Dorsolateral prefrontal cortex (tissue), 120 donors: ENCODE measurements at regions of chr7 and their contacts with region 1.

Region 1: GRCh38 chr7:35624299-35625186 is 70.4 kb downstream of the HERPUD2 start:
- DNase-seq: peak in 5 of 10 donors; percentile 10 to 45 (median 24)
- H3K4me3 ChIP-seq: peak overlapping the region in 15 of 59 donors; percentile 1 to 37 (median 19)
- H3K27ac ChIP-seq: no peak overlapping the region
- H3K27me3 ChIP-seq: no peaks in the 10 kb centered on the region
- CTCF ChIP-seq: peak in 55 of 56 donors; percentile 32 to 91 (median 80)

Region 2: DNA sequence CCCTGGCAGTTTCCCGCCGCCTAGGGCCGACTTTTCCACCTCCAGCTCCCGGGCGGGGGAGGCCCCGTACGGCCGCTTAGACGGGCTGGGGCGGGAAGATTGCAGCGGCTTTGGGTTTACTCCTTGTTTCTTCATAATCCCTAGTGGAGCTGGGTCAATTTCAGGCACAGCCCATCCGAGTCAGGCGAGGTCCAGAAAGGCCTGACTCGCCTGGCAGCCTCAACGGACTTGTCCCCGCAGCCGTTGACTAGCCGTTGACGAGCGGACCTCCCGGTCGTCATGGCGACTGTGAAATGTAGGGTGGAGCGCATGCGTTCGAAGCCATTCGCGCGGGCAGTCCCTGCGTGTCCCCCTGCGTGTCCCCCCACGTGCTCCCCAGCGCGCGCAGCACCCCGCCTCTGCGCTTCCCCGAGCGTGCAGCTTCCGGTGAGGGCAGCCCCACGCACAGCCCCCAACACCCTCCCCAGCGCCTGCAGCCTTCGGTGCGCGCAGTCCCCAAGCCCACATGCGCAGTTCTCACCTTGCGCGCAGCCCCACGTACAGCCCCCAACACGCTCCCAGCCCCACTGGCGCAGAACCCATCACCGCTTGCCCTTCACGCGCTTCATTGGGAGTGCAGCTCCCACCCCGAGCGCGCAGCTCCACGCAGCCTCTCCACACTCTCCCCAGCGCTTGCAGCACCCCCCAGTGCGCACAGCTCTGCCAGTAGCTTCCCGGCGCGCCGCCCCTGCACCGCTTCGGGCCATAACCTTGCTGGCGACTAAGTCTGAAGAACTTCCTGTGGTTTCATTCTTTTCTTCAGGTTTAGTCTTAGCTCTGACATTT is 438.4 kb before region 1 on chr7:
- intact Hi-C with region 1: loop called in 1 of 2 experiments (anchors 10 kb)
- DNase-seq: peak; percentile 35 to 85 (median 80)
- H3K4me3 ChIP-seq: peak overlapping the region; percentile 36 to 72 (median 55)
- H3K27ac ChIP-seq: peak overlapping the region in 39 of 59 donors; percentile 24 to 78 (median 56)
- H3K27me3 ChIP-seq: peaks cover 0 to 20% (median 0%) of the 10 kb centered on the region in 45 donors
- CTCF ChIP-seq: peak in 4 of 56 donors; percentile 10 to 18 (median 14)

Region 3: DNA sequence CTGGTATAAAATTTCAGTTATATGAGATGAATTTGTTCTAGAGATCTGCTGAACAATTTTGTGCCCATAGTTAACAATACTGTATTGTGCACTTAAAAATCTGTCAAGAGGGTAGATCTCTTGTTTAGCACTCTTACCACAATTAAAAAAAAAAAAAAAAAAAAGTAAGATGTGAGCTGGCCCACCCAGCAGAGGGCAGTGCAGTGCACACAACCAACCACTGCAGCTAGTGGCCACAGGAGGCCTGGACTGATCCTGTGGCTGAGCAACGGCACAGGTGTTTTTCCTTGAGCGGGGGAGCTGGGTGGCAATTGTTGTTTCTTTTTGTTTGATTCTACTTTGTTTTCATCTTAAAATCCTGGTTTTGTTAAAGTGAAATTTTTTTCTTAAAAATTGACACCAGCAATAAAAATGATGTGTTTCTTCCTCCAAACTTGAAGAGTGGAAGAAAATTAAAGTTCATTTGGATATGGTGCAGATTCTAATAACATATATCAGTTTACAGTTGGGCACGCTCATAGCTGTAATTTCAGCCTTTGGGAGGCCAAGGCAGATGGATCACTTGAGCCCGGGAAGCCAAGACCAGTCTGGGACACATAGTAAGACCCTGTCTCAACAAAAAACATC is 199.6 kb before region 1 on chr7:
- intact Hi-C with region 1: loop called in 1 of 2 experiments (anchors 10 kb)
- DNase-seq: no peak
- H3K4me3 ChIP-seq: no peak overlapping the region
- H3K27ac ChIP-seq: no peak overlapping the region
- H3K27me3 ChIP-seq: peaks cover 0 to 30% (median 0%) of the 10 kb centered on the region in 45 donors
- CTCF ChIP-seq: peak; percentile 30 to 76 (median 62)

Region 4: DNA sequence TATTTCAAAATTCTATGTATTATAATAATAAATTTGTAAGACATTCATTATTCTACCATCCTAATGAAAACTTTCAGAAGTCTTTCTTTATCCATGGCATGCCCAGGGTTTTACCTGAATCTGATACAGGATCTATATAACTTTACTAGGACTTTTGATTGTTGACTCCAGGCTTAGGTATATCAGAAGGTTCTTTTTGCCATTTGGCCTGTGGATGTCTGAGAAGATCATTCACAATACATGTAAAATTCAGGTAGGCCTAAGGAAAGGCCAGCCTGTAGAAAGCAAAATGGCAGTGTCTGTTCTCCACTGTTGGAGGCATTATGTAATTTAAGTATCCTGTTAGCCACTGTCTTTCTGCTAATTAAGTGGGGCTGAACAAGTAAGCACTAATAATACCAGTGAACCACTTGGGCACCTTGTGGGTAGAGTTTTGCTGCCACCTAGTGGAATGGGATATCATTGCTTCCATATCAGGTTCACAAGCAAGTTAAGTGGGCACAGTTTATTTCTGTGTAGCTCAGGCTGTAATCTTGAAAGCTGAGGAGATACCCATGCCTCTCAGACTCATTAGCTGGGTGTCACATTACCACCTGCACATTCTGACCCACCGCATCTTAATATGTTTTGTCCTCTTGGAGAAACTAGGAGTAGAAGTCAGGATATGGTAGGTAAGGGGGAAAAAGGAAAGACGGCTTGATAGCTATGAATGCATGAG is 281.8 kb after region 1 on chr7:
- intact Hi-C with region 1: loop called in 1 of 2 experiments (anchors 10 kb)
- DNase-seq: peak in 4 of 10 donors; percentile 50 to 75 (median 72)
- H3K4me3 ChIP-seq: no peak overlapping the region
- H3K27ac ChIP-seq: peak overlapping the region in 58 of 59 donors; percentile 17 to 90 (median 79)
- H3K27me3 ChIP-seq: no peaks in the 10 kb centered on the region
- CTCF ChIP-seq: peak; percentile 82 to 99 (median 94)